Heart left ventricle (tissue), 16 donors: ENCODE measurements at regions of chr6 and their contacts with region 1.

Region 1: DNA sequence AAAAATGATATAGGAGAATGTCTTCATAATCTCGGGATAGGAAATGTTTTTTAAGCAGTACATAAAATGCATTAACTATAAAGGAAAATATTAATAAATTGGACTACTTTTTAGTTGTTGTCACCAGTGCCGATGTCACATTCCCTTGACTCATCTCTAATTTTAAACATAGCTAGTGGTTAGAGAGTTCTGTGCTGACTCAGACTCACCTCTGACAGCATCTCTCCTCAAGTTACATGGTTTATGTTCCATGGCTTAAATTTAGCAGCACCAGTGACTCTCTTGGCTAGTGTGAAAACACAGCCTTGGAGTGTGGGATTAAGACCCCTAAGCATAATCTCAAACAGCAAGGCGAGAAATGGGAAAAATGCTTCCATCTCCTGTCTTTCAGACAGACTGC is 311.8 kb upstream of the MMS22L start:
- DNase-seq: peak in 3 of 5 donors; percentile 12 to 26 (median 23)
- ATAC-seq: peak; percentile 93 to 100 (median 98)
- H3K4me3 ChIP-seq: no peak overlapping the region
- H3K27ac ChIP-seq: peak overlapping the region in 9 of 12 donors; percentile 15 to 81 (median 58)
- H3K4me1 ChIP-seq: peaks cover 0 to 8% (median 0%) of the 10 kb centered on the region in 12 donors
- H3K27me3 ChIP-seq: no peaks in the 10 kb centered on the region
- CTCF ChIP-seq: no peak
- POLR2A ChIP-seq: no peak

Region 2: GRCh38 chr6:97669191-97670031 is 74.6 kb after region 1 on chr6:
- intact Hi-C with region 1: loop called in 2 of 10 experiments (anchors 2 to 5 kb)
- DNase-seq: peak; percentile 16 to 60 (median 40)
- ATAC-seq: peak; percentile 67 to 98 (median 90)
- H3K4me3 ChIP-seq: peak overlapping the region in 11 of 12 donors; percentile 6 to 48 (median 34)
- H3K27ac ChIP-seq: peak overlapping the region in 7 of 12 donors; percentile 21 to 67 (median 53)
- H3K4me1 ChIP-seq: peaks cover 0 to 10% (median 0%) of the 10 kb centered on the region in 12 donors
- H3K27me3 ChIP-seq: no peaks in the 10 kb centered on the region
- CTCF ChIP-seq: no peak
- POLR2A ChIP-seq: no peak